Transverse colon (tissue), 4 donors: ENCODE measurements at regions of chr14 and their contacts with region 1.

Region 1: DNA sequence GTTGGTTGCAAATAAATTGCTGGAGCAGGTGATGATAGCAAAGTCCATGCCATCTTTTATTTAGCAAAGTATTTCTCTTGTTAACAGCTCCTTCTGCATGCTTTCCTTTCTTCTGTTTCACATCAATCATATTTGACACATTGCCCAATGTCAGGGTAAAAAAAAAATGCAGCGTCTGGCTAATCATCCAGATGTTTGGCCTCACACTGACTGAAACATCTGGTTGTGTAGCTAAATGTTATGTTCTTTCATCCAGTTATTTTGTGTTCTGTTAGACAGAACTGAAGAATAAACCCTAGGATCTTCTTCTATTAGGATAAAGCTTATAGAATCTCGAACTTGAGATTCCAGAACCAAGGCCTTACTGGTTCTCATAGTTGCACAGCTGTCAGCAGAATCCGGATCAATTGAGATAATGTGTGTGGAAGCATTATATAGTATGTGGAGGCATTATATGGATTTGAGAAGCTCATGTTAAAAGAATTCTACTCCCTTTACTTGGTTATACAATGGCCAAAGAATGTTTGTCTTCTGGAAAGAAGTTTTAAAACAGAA is 859.2 kb downstream of the DIO2 start:
- DNase-seq: no peak
- H3K4me3 ChIP-seq: no peak overlapping the region
- H3K27ac ChIP-seq: no peak overlapping the region
- H3K4me1 ChIP-seq: no peaks in the 10 kb centered on the region
- H3K27me3 ChIP-seq: no peaks in the 10 kb centered on the region
- CTCF ChIP-seq: no peak
- EP300 ChIP-seq: no peak
- POLR2A ChIP-seq: no peak

Region 2: GRCh38 chr14:79947440-79948054 is 595.4 kb after region 1 on chr14:
- in situ Hi-C with region 1: no loop called
- intact Hi-C with region 1: loop called (anchors 5 kb)
- DNase-seq: no peak
- H3K4me3 ChIP-seq: no peak overlapping the region
- H3K27ac ChIP-seq: no peak overlapping the region
- H3K4me1 ChIP-seq: no peaks in the 10 kb centered on the region
- H3K27me3 ChIP-seq: no peaks in the 10 kb centered on the region
- CTCF ChIP-seq: no peak
- EP300 ChIP-seq: no peak
- POLR2A ChIP-seq: no peak